ENCODE measurements at regions of chr7 and their contacts with region 1.

Region 1: DNA sequence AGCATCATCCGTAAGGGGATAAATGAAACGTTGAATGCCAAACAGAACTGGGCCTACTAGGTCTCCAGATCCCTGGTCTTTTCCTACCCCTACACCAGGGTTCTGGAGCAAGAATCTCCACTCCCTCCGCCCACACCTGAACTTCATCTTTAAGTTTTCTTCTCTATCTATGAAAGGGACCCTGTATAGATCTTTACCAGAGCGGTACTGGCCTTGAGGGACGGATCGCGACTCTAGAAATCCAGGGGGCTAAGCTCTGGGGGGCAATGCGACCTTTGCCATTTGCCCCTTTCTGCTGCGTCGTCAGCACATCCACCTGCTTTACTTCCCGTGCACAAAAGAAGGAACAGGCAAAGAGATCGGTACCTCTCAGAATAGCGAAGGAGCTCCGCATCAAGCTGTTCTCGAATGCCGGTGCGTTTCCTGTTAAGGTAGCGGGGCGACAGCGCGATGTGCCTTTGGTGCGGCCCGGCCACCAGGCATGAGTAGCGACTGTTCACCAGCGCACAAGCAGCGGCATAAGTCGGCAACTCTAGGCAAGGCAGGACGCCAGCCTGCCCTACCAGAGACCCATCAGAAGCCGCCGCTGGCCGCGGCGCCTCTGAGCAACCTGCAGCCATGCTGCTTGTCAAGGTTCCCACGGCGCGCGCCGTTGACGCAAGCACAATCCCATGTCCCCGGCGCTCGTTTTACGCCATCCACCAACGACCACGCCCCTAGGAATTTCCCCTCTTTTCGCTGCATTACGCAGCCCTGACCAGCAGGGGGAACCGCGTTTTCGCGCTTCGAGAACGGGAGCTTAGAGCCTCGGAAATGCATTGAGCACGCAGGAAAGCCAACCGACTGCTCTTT is at the start of gene POLR1F:
- DNase-seq: peak; percentile 95 to 98 (median 97)
- H3K4me3 ChIP-seq: peak within 1 kb of the TSS; percentile 93 to 100 (median 95)
- H3K27ac ChIP-seq: peak within 1 kb of the TSS; percentile 86 to 93
- H3K4me1 ChIP-seq: peaks cover 12 to 33% (median 23%) of the 10 kb centered on the region in 4 experiments
- H3K27me3 ChIP-seq: no peaks in the 10 kb centered on the region

Region 2: DNA sequence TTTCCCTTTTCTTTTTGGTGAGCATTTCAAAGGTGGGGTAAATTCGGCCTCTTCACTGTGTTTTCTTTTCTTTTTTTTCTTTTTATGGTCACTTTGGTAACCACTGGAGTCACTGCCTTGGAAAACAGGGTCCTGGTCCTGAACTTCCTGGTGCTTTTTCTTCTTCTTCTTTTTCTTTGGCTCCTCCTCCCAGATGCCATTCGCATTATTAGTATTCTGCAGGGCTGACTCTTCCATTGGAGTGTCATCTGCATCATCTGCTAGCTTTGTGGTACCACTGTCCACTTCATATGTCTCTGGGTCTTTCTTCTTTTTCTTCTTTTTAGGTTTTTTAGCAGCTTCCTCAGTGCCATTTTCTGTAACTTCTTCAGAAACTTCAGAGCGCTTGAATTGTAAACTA is 10.3 kb before region 1 on chr7:
- CTCF ChIA-PET with region 1: interaction called, 11 read pairs
- POLR2A ChIA-PET with region 1: interaction called, 4 read pairs
- DNase-seq: no peak
- H3K4me3 ChIP-seq: no peak overlapping the region
- H3K27ac ChIP-seq: no peak overlapping the region
- H3K4me1 ChIP-seq: no peaks in the 10 kb centered on the region
- H3K27me3 ChIP-seq: no peaks in the 10 kb centered on the region